OCI-LY7 (cell line): ENCODE measurements at regions of chr10 and their contacts with region 1.

Region 1: GRCh38 chr10:20004087-20004523 is 187.9 kb downstream of the PLXDC2 start:
- DNase-seq: no peak
- H3K4me3 ChIP-seq: no peak overlapping the region
- H3K27ac ChIP-seq: peak overlapping the region; percentile 63
- H3K4me1 ChIP-seq: peaks cover 18% of the 10 kb centered on the region
- CTCF ChIP-seq: no peak

Region 2: GRCh38 chr10:18659120-18659818 is 1344.8 kb before region 1 on chr10 and contains the start of gene ARL5B:
- CTCF ChIA-PET with region 1: no interaction called
- POLR2A ChIA-PET with region 1: no interaction called
- intact Hi-C with region 1: loop called (anchors 10 kb)
- DNase-seq: peak; percentile 94
- H3K4me3 ChIP-seq: peak within 1 kb of the TSS; percentile 97
- H3K27ac ChIP-seq: peak within 1 kb of the TSS; percentile 84
- H3K4me1 ChIP-seq: peaks cover 24% of the 10 kb centered on the region
- CTCF ChIP-seq: no peak
- total RNA-seq, gene ARL5B: 9.9 and 11.5 TPM in 2 replicates

Region 3: GRCh38 chr10:20202337-20202736 is 198.2 kb after region 1 on chr10:
- CTCF ChIA-PET with region 1: no interaction called
- POLR2A ChIA-PET with region 1: no interaction called
- intact Hi-C with region 1: no loop called
- DNase-seq: no peak
- H3K4me3 ChIP-seq: no peak overlapping the region
- H3K27ac ChIP-seq: no peak overlapping the region
- H3K4me1 ChIP-seq: no peaks in the 10 kb centered on the region
- CTCF ChIP-seq: no peak